Caco-2 (cell line): ENCODE measurements at regions of chr12 and their contacts with region 1.

Region 1: GRCh38 chr12:57693659-57694458 is at the start of gene OS9:
- DNase-seq: peak; percentile 95 to 99
- H3K4me3 ChIP-seq: peak within 1 kb of the TSS; percentile 81
- H3K4me3 Mint-ChIP-seq: no peak within 1 kb of the TSS
- H3K27ac Mint-ChIP-seq: no peak within 1 kb of the TSS
- H3K4me1 ChIP-seq: peaks cover 9% of the 10 kb centered on the region
- H3K4me1 Mint-ChIP-seq: peaks cover 8% of the 10 kb centered on the region
- H3K27me3 ChIP-seq: no peaks in the 10 kb centered on the region
- H3K27me3 Mint-ChIP-seq: no peaks in the 10 kb centered on the region
- CTCF ChIP-seq: peak; percentile 72 to 74
- total RNA-seq, gene OS9: 169 and 182 TPM in 2 replicates

Region 2: GRCh38 chr12:57590536-57591479 is 103.1 kb before region 1 on chr12 and contains the start of gene PIP4K2C:
- CTCF ChIA-PET with region 1: no interaction called
- POLR2A ChIA-PET with region 1: no interaction called
- intact Hi-C with region 1: loop called (anchors 1 kb)
- DNase-seq: peak; percentile 87 to 90
- H3K4me3 ChIP-seq: peak within 1 kb of the TSS; percentile 80
- H3K4me3 Mint-ChIP-seq: peak within 1 kb of the TSS; percentile 90
- H3K27ac Mint-ChIP-seq: peak within 1 kb of the TSS; percentile 88
- H3K4me1 ChIP-seq: peaks cover 13% of the 10 kb centered on the region; the same call in 1 of the 2 replicates
- H3K4me1 Mint-ChIP-seq: peaks cover 19% of the 10 kb centered on the region
- H3K27me3 ChIP-seq: no peaks in the 10 kb centered on the region
- H3K27me3 Mint-ChIP-seq: no peaks in the 10 kb centered on the region
- CTCF ChIP-seq: no peak
- total RNA-seq, gene PIP4K2C: 42.0 and 48.0 TPM in 2 replicates

Region 3: DNA sequence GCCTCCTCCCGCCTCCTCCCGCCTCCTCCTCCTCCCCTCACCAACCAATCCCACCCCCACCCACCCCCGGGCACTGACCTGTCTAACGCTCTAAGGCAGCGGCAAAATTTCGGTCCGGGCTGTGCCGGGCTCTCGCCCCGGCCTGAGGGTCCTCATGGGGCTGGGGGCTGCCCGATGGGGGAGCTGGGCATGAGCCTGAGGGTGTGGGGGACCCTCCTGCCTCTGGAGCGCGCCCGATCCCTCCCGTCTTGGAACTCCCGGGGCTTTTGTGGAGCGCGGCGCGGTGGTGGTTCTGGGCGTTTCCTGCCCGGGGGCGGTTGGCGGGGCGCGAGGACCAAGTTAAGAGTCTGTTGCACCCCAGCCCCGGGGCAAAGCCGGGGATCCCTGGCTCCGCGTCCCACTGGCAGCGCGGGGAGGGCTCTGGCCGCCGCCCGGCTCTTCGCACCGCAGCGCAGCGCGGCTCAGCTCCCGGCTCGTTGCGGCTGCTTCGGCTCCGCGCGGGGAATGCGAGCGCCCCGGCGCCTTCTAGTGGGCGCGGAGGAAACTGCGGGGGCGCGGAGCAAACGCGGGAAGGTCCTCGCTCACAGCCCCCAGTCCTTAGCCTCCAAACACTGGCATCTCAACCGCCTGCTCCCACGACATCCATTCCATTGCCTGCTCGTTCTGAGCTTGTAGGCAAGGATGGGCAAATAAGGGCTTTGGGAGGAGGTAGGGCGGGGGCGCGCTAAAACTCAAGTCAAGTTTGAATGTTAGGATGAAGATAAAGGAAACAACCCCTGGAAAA is 61.0 kb before region 1 on chr12 and contains the start of gene B4GALNT1:
- CTCF ChIA-PET with region 1: interaction called, 3 read pairs
- POLR2A ChIA-PET with region 1: no interaction called
- intact Hi-C with region 1: loop called (anchors 2 kb)
- DNase-seq: peak in 1 of 2 experiments; percentile 82
- H3K4me3 ChIP-seq: peak within 1 kb of the TSS; percentile 49
- H3K4me3 Mint-ChIP-seq: peak within 1 kb of the TSS; percentile 49
- H3K27ac Mint-ChIP-seq: no peak within 1 kb of the TSS
- H3K4me1 ChIP-seq: no peaks in the 10 kb centered on the region
- H3K4me1 Mint-ChIP-seq: peaks cover 5% of the 10 kb centered on the region
- H3K27me3 ChIP-seq: no peaks in the 10 kb centered on the region
- H3K27me3 Mint-ChIP-seq: no peaks in the 10 kb centered on the region
- CTCF ChIP-seq: peak; percentile 85 to 90
- total RNA-seq, gene B4GALNT1: 4.2 and 5.7 TPM in 2 replicates

Region 4: DNA sequence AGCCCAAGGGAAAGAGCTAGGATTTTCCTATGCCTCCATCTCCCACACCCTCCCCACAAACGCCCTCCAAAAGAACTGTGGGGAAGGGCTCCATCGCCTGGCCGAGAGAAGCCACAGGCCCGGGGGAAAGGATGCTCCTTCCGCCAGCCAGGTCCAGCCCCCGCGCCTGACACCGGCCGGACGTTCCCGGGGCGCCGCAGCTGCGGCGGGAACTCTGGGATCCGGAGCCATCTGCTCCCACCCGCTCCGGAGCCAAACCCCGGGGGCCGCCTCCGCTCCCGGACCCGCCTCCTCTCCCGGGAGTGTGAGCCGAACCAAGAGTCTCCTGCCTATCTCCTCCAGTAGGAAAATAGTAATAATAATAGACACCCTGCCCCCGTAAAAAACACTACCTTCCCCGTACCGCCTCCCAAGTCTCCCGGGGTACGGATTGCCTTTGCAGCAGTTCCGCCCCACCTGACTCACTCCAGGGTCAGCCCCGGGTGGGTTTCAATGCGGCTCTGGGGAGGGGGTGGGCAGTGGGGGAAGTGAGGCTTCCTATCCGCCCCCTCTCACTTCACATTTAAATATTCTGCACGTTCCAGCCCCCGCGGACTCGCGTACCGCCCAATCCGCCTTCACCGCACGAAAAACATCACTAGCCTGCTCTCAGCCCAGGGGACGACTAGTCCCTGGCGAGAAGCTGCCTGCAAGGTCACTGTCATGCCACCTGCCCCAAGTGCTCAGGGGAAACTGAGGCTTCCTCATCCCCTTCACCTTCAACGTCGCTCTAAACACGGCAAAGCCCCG is 42.3 kb after region 1 on chr12:
- CTCF ChIA-PET with region 1: no interaction called
- POLR2A ChIA-PET with region 1: no interaction called
- intact Hi-C with region 1: loop called (anchors 5 kb)
- DNase-seq: peak in 1 of 2 experiments; percentile 69
- H3K4me3 ChIP-seq: peak overlapping the region; percentile 25
- H3K4me3 Mint-ChIP-seq: peak overlapping the region; percentile 68
- H3K27ac Mint-ChIP-seq: no peak overlapping the region
- H3K4me1 ChIP-seq: peaks cover 12% of the 10 kb centered on the region
- H3K4me1 Mint-ChIP-seq: peaks cover 17% of the 10 kb centered on the region
- H3K27me3 ChIP-seq: peaks cover 7% of the 10 kb centered on the region
- H3K27me3 Mint-ChIP-seq: peaks cover 36% of the 10 kb centered on the region
- CTCF ChIP-seq: peak; percentile 12 to 57